ENCODE measurements at regions of chr17 and their contacts with region 1.

Region 1: GRCh38 chr17:82129095-82129494 is 31.1 kb upstream of the FASN start:
- DNase-seq: no peak
- ATAC-seq: no peak
- H3K4me3 ChIP-seq: no peak overlapping the region
- H3K4me3 Mint-ChIP-seq: peak overlapping the region in 1 of 3 donors; percentile 13
- H3K27ac ChIP-seq: peak overlapping the region; percentile 58
- H3K27ac Mint-ChIP-seq: peak overlapping the region; percentile 75 to 99
- H3K4me1 ChIP-seq: peaks cover 27 to 58% of the 10 kb centered on the region in 2 experiments
- H3K4me1 Mint-ChIP-seq: peaks cover 45 to 52% (median 50%) of the 10 kb centered on the region in 3 donors
- H3K27me3 ChIP-seq: no peaks in the 10 kb centered on the region
- H3K27me3 Mint-ChIP-seq: no peaks in the 10 kb centered on the region

Region 2: GRCh38 chr17:82105882-82106687 is 23.0 kb before region 1 on chr17:
- CTCF ChIA-PET with region 1: interaction called in 1 of 2 experiments, 7 read pairs
- POLR2A ChIA-PET with region 1: interaction called, 8 to 13 read pairs
- DNase-seq: peak in 32 of 35 experiments; percentile 16 to 69 (median 45)
- ATAC-seq: peak; percentile 74 to 91 (median 88)
- H3K4me3 ChIP-seq: peak overlapping the region; percentile 53 to 79
- H3K4me3 Mint-ChIP-seq: peak overlapping the region; percentile 82 to 91 (median 84)
- H3K27ac ChIP-seq: peak overlapping the region; percentile 94
- H3K27ac Mint-ChIP-seq: peak overlapping the region; percentile 98
- H3K4me1 ChIP-seq: peaks cover 16 to 36% of the 10 kb centered on the region in 2 experiments
- H3K4me1 Mint-ChIP-seq: peaks cover 30 to 36% (median 31%) of the 10 kb centered on the region in 3 donors
- H3K27me3 ChIP-seq: no peaks in the 10 kb centered on the region
- H3K27me3 Mint-ChIP-seq: no peaks in the 10 kb centered on the region

Region 3: GRCh38 chr17:82114872-82115271 is 14.2 kb before region 1 on chr17:
- CTCF ChIA-PET with region 1: interaction called, 4 to 5 read pairs
- POLR2A ChIA-PET with region 1: interaction called, 8 to 20 read pairs
- DNase-seq: no peak
- ATAC-seq: no peak
- H3K4me3 ChIP-seq: no peak overlapping the region
- H3K4me3 Mint-ChIP-seq: no peak overlapping the region
- H3K27ac ChIP-seq: no peak overlapping the region
- H3K27ac Mint-ChIP-seq: no peak overlapping the region
- H3K4me1 ChIP-seq: peaks cover 4 to 6% of the 10 kb centered on the region in 2 experiments
- H3K4me1 Mint-ChIP-seq: peaks cover 8 to 15% (median 14%) of the 10 kb centered on the region in 3 donors
- H3K27me3 ChIP-seq: no peaks in the 10 kb centered on the region
- H3K27me3 Mint-ChIP-seq: no peaks in the 10 kb centered on the region